Panc1 (cell line): ENCODE measurements at regions of chr2 and their contacts with region 1.

Region 1: DNA sequence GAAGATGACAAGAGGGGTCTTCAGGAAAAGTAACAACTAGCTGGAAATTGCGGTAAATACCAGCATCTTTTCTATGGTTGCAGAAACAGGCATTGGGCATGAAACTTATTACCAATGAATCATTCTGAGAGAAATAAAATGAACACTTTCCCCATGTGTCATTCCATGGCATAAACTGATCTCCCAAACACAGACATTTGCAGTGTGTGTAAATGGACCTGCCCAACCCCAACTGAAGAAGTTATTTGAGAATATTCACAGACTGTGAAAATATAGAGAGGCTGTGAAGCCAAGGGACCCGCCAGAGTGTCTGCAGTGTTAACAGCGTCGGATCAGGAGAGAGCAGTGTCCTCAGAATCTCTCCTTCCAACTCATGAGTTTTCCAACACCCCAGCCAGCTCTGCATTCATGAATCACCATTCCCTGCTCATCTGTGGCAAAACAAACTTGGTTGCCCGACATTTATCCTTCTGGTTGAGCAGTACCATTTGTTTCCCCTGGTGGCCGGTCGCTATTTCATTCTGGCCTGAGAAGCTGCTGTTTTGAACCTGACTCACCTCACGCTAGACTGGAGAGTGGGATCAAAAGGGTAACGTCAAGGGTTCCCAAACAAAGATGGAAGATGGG is 238.4 kb downstream of the PID1 start:
- DNase-seq: no peak
- ATAC-seq: no peak
- H3K4me3 ChIP-seq: no peak overlapping the region
- H3K27ac ChIP-seq: no peak overlapping the region
- H3K4me1 ChIP-seq: no peaks in the 10 kb centered on the region
- H3K27me3 ChIP-seq: no peaks in the 10 kb centered on the region
- CTCF ChIP-seq: no peak

Region 2: DNA sequence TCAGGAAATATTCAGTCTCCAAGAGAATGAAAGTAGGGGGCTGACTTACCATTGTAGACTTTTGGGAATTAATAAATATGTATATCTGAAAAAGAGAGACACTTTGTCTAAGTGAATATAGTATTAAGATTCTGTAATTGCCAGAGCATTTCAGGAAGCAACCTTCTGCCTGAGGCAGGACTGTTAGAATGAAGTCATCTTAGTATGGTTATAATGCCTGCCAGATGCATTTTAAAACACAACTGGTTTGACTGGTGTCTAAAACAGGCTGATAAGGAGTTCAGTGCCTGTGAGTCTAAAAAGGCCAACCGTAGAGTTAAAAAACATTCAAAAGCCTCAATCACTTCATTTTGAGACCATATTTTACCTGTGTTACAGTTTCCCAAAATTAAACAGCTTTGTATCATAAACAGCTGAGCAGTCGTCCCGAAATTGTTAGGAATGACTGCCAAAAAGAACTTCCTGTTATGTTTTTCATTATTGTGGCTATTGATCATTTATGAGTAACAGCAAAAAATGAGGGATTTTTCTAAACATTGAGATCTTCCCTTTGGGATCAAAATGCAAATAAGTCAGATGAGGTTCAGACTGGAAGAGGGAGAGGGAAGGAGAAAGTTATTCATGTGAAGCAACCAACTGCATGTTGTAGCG is 205.5 kb before region 1 on chr2:
- CTCF ChIA-PET with region 1: no interaction called
- POLR2A ChIA-PET with region 1: no interaction called
- in situ Hi-C with region 1: no loop called
- intact Hi-C with region 1: no loop called
- DNase-seq: no peak
- ATAC-seq: no peak
- H3K4me3 ChIP-seq: no peak overlapping the region
- H3K27ac ChIP-seq: no peak overlapping the region
- H3K4me1 ChIP-seq: no peaks in the 10 kb centered on the region
- H3K27me3 ChIP-seq: no peaks in the 10 kb centered on the region
- CTCF ChIP-seq: no peak

Region 3: DNA sequence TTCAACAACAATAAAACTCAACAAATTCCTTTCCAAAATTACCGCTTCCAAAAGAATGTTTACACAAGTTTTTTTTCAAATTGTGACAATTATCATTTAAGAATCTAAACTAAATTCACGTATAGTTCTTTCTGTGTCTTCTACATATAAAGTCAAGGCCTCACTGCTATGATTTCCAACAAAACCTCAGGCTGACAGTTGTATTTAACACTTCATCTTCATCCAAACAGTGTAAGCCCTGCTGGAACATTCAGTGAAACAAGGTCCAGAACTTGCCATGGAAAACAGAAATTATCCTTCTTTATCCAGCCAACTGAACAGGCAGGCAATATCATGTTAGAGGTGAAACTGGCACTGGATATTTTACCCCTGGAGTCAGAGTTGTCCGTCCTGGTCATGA is 119.5 kb before region 1 on chr2:
- CTCF ChIA-PET with region 1: no interaction called
- POLR2A ChIA-PET with region 1: no interaction called
- in situ Hi-C with region 1: no loop called
- intact Hi-C with region 1: no loop called
- DNase-seq: no peak
- ATAC-seq: no peak
- H3K4me3 ChIP-seq: no peak overlapping the region
- H3K27ac ChIP-seq: no peak overlapping the region
- H3K4me1 ChIP-seq: no peaks in the 10 kb centered on the region
- H3K27me3 ChIP-seq: no peaks in the 10 kb centered on the region
- CTCF ChIP-seq: no peak

Region 4: DNA sequence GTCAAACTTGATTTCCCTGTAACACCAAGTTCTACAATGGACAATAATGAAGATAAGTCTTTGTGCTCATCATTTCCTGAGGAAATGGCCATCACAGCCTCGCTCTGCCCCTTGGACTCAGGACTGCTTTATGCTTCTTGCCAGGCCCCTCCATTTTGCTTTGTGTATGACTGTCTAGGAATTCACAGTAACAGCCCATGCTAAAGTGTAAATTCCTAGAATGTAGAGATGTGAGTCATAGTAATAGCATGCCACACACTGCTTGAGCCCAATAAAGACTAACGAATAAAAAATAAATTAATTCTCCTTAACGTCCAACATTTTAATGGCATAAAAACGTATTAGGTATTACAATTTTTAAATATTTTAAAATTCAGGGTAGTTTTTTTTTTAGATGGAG is 11.9 kb after region 1 on chr2:
- CTCF ChIA-PET with region 1: no interaction called
- POLR2A ChIA-PET with region 1: no interaction called
- in situ Hi-C with region 1: no loop called
- intact Hi-C with region 1: loop called (anchors 1 kb)
- DNase-seq: no peak
- ATAC-seq: no peak
- H3K4me3 ChIP-seq: no peak overlapping the region
- H3K27ac ChIP-seq: no peak overlapping the region
- H3K4me1 ChIP-seq: no peaks in the 10 kb centered on the region
- H3K27me3 ChIP-seq: no peaks in the 10 kb centered on the region
- CTCF ChIP-seq: no peak